HepG2 (cell line): ENCODE measurements at regions of chr6 and their contacts with region 1.

Region 1: DNA sequence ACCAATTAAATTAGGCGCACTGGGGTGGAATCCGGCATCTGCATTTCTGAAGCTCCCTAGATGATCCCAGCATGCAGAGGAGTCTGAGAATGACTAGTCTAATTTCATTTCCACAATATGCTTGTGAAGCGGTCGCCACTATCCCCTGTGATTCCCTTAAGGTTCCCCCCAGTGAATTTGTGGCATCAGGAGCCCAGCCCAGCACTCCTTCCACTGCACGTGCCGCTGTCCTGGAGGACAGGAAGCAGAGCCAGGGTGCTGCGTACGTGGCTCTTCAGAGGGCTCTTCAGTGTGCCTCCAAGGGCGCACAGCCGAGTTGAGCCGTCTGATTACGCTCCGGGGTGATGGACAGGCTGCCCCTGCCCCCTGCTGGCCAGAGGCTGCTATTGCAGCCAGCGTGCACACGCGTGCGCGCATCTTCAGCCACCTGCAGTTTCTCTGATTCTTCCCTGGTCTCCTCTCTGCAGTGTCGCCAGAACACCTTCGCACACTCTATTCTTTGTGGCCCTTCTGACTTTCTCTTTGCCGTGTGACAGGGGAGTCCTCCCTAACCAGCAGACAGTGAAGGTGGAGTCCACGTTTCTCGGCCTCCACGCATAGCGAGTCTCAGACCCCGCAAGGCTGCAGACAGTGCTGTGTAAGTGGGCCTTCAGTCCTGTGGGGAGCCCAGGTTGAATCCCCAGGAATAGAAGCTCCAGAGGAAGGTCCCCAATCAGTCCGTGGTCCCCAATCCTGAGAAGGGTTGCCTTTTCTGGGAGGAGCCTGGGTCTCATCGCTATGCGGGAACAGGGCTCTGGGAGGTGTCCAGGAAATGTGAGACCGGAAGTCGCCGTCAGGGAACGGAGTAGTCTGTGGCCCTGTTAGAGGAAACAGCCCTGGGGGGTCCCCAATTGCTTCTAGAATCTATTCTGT is 16.5 kb upstream of the NCR2 start:
- DNase-seq: peak; percentile 70
- ATAC-seq: peak; percentile 88
- H3K4me3 ChIP-seq: peak overlapping the region; percentile 1 to 42 (median 11); a peak in 3 of 6 replicates
- H3K27ac ChIP-seq: no peak overlapping the region
- H3K4me1 ChIP-seq: peaks cover 35% of the 10 kb centered on the region
- H3K27me3 ChIP-seq: peaks cover 0 to 23% of the 10 kb centered on the region in 2 experiments; a peak in 3 of 5 replicates
- CTCF ChIP-seq: peak; percentile 100
- EP300 ChIP-seq: no peak
- POLR2A ChIP-seq: no peak
- RAD21 ChIP-seq: peak; percentile 94

Region 2: DNA sequence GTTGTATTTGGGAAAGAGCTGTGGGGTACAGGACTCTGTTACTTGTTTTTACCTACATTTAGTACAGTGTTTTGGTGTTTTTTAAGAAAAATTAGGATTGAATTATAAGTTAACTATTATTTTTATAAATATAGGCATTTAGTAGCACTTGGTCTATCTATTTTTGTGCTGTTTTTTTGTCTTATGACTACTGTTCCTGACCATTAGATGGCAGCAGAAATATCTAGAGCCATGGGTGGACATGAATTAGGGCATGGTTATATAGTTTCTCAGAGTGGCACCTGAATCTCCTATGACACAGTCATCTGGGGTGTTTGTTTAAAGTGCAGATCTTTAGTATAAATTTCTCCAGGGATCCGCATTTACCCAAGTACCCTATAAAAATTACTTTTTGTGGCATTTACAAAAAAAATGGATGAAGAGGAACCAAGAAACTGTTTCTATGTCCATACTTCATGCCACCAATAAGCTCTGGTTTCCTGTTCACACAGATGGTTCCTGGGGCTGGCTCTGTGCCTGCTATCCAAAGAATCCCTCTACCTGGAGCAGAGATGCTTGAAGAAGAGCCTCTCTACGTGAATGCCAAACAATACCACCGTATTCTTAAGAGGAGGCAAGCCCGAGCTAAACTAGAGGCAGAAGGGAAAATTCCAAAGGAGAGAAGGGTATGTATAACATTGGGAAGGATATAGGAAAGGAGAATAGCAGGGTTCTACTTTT is 226.3 kb before region 1 on chr6:
- CTCF ChIA-PET with region 1: interaction called, 4 read pairs
- POLR2A ChIA-PET with region 1: no interaction called
- in situ Hi-C with region 1: no loop called
- intact Hi-C with region 1: loop called (anchors 5 kb)
- DNase-seq: peak; percentile 41
- ATAC-seq: peak; percentile 56; the same call in 2 of the 3 replicates
- H3K4me3 ChIP-seq: no peak overlapping the region
- H3K27ac ChIP-seq: no peak overlapping the region
- H3K4me1 ChIP-seq: no peaks in the 10 kb centered on the region
- H3K27me3 ChIP-seq: no peaks in the 10 kb centered on the region
- CTCF ChIP-seq: peak; percentile 46; the same call in 1 of the 2 replicates
- EP300 ChIP-seq: no peak
- POLR2A ChIP-seq: no peak
- RAD21 ChIP-seq: no peak

Region 3: GRCh38 chr6:41280381-41281057 is 38.4 kb before region 1 on chr6:
- CTCF ChIA-PET with region 1: interaction called, 5 read pairs
- POLR2A ChIA-PET with region 1: no interaction called
- in situ Hi-C with region 1: no loop called
- intact Hi-C with region 1: loop called (anchors 2 kb)
- DNase-seq: no peak
- ATAC-seq: no peak
- H3K4me3 ChIP-seq: no peak overlapping the region
- H3K27ac ChIP-seq: no peak overlapping the region
- H3K4me1 ChIP-seq: no peaks in the 10 kb centered on the region
- H3K27me3 ChIP-seq: peaks cover 2 to 34% of the 10 kb centered on the region in 2 experiments; a peak in 4 of 5 replicates
- CTCF ChIP-seq: no peak
- EP300 ChIP-seq: no peak
- POLR2A ChIP-seq: no peak
- RAD21 ChIP-seq: no peak

Region 4: DNA sequence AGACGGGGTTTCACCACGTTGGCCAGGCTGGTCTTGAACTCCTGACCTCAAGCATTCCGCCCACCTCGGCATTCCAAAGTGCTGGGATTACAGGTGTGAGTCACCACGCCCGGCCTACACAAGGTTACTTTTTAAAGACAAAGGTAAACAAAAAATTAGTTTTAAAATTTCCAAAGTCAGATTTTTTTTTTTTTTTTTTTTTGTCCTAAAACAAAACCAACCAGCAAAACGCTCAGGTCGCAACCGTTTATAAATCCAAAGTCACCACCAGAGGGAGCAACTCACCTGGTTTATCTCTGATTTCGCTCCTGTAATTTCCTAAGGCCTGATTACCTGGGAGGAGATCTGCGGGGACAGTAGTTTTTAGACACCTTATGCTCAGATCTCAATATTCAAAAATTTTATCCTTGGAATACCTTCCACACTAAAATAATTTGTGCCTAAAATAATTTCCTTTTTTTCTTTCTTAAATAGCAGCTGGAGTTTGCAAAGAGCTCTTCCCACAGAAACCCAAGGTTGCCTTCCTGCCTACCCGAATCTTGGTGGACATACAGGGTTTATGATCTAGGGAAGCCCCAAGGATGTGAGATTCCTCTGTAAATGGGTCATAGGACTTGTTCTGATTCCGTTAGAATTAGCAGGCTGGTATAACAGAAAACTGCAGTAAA is 12.6 kb before region 1 on chr6:
- CTCF ChIA-PET with region 1: interaction called, 37 read pairs
- POLR2A ChIA-PET with region 1: no interaction called
- in situ Hi-C with region 1: no loop called
- intact Hi-C with region 1: loop called (anchors 1 kb)
- DNase-seq: peak; percentile 70
- ATAC-seq: peak; percentile 69
- H3K4me3 ChIP-seq: no peak overlapping the region
- H3K27ac ChIP-seq: no peak overlapping the region
- H3K4me1 ChIP-seq: peaks cover 6% of the 10 kb centered on the region
- H3K27me3 ChIP-seq: peaks cover 2 to 23% of the 10 kb centered on the region in 2 experiments; a peak in 3 of 5 replicates
- CTCF ChIP-seq: peak; percentile 69
- EP300 ChIP-seq: no peak
- POLR2A ChIP-seq: no peak
- RAD21 ChIP-seq: no peak